Activated CD4-positive, alpha-beta memory T cell treated with anti-CD3 and anti-CD28 coated beads for 36 hours (primary cell): ENCODE measurements at regions of chr1 and their contacts with region 1.

Region 1: GRCh38 chr1:237507005-237507404 is 383.7 kb downstream of the ZP4 start:
- DNase-seq: peak; percentile 9
- H3K4me3 Mint-ChIP-seq: no peak overlapping the region
- H3K27ac Mint-ChIP-seq: no peak overlapping the region
- H3K4me1 Mint-ChIP-seq: peaks cover 6% of the 10 kb centered on the region
- H3K27me3 Mint-ChIP-seq: peaks cover 28% of the 10 kb centered on the region

Region 2: GRCh38 chr1:237269938-237270337 is 237.1 kb before region 1 on chr1:
- CTCF ChIA-PET with region 1: no interaction called
- POLR2A ChIA-PET with region 1: no interaction called
- intact Hi-C with region 1: loop called (anchors 5 kb)
- DNase-seq: no peak
- H3K4me3 Mint-ChIP-seq: no peak overlapping the region
- H3K27ac Mint-ChIP-seq: no peak overlapping the region
- H3K4me1 Mint-ChIP-seq: peaks cover 15% of the 10 kb centered on the region
- H3K27me3 Mint-ChIP-seq: peaks cover 7% of the 10 kb centered on the region

Region 3: GRCh38 chr1:237470712-237471310 is 36.2 kb before region 1 on chr1:
- CTCF ChIA-PET with region 1: no interaction called
- POLR2A ChIA-PET with region 1: no interaction called
- intact Hi-C with region 1: no loop called
- DNase-seq: no peak
- H3K4me3 Mint-ChIP-seq: no peak overlapping the region
- H3K27ac Mint-ChIP-seq: no peak overlapping the region
- H3K4me1 Mint-ChIP-seq: no peaks in the 10 kb centered on the region
- H3K27me3 Mint-ChIP-seq: no peaks in the 10 kb centered on the region